ENCODE measurements at regions of chr2 and their contacts with region 1.

Region 1: DNA sequence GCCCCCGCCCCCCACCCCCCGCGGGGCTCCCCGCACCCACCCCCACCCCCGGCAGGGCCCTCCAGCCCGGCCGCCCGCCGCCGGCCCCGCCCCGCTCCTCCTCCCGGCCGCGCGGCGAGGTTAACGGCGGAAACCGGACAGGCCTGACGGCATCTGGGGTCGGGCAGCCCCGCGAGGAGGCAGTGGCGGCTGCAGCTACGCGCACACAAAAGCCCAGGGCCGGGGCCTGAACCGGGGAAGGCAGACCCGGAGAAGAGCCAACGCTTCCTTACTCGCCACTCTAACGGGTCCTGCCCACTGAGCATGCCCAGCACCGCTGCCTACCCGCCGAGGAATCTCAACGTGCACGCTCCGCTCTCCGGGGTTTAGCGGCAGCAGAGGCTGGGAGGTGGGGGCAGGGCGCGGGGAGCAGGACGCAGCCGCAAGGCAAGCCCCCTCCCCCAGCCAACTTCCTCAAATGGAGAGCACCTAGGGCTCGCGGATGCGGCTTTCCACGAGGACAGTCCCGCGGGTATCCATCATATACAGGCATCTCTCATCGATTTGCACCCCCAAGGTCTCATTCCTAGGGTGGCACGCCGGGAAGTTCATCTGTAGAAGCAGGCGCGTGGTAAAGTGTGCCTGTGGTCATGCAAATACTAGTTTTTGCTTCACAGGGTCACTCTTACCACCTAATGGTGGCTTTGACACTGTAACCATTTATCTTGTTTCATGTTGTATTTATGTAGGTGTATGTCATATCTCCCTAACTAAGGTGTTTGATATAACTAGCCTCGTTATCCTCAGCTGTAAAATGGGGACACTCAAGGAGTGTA is at the start of gene MEMO1:
- DNase-seq: peak; percentile 90 to 96 (median 94)
- H3K4me3 ChIP-seq: peak within 1 kb of the TSS; percentile 74 to 88 (median 82)
- H3K4me3 Mint-ChIP-seq: peak within 1 kb of the TSS; percentile 95 to 98
- H3K27ac ChIP-seq: peak within 1 kb of the TSS; percentile 83 to 97
- H3K27ac Mint-ChIP-seq: peak within 1 kb of the TSS; percentile 89 to 96 (median 95)
- H3K4me1 ChIP-seq: peaks cover 42 to 50% of the 10 kb centered on the region in 2 donors
- H3K4me1 Mint-ChIP-seq: peaks cover 49% of the 10 kb centered on the region
- H3K27me3 ChIP-seq: no peaks in the 10 kb centered on the region
- H3K27me3 Mint-ChIP-seq: peaks cover 0 to 2% (median 0%) of the 10 kb centered on the region in 3 donors
- CTCF ChIP-seq: no peak
- polyA plus RNA-seq, gene MEMO1: 49.5 to 63.7 (median 57.0) TPM

Region 2: GRCh38 chr2:31957354-31958139 is 53.3 kb before region 1 on chr2:
- intact Hi-C with region 1: loop called (anchors 10 kb)
- DNase-seq: peak; percentile 5 to 49 (median 27)
- H3K4me3 ChIP-seq: peak overlapping the region; percentile 54 to 93 (median 75)
- H3K4me3 Mint-ChIP-seq: peak overlapping the region; percentile 73 to 81
- H3K27ac ChIP-seq: peak overlapping the region in 1 of 2 donors; percentile 86
- H3K27ac Mint-ChIP-seq: peak overlapping the region; percentile 89 to 96 (median 93)
- H3K4me1 ChIP-seq: peaks cover 26 to 30% of the 10 kb centered on the region in 2 donors
- H3K4me1 Mint-ChIP-seq: peaks cover 43% of the 10 kb centered on the region
- H3K27me3 ChIP-seq: no peaks in the 10 kb centered on the region
- H3K27me3 Mint-ChIP-seq: no peaks in the 10 kb centered on the region
- CTCF ChIP-seq: no peak

Region 3: DNA sequence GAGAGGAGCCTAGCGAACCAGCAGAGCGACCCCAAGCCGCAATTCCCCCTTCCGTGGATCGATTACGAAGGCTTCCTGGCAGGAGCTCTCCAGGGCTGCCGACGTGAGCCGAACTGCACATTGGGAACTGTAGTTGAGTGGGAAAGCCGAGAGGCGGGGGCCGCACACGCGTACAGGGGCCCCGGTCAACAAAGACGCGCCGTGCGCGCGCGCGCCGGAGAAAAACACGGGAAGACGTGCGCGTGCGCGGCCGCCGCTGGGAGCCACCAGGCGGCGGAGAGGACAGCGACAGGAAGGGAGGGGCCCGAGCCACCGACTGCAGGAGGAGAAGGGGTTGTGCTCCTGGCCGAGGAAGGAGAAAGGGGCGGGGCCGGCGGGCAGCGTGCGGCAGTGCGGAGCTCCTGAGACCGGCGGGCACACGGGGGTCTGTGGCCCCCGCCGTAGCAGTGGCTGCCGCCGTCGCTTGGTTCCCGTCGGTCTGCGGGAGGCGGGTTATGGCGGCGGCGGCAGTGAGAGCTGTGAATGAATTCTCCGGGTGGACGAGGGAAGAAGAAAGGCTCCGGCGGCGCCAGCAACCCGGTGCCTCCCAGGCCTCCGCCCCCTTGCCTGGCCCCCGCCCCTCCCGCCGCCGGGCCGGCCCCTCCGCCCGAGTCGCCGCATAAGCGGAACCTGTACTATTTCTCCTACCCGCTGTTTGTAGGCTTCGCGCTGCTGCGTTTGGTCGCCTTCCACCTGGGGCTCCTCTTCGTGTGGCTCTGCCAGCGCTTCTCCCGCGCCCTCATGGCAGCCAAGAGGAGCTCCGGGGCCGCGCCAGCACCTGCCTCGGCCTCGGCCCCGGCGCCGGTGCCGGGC is 52.7 kb after region 1 on chr2 and contains the start of gene SPAST:
- intact Hi-C with region 1: loop called (anchors 5 kb)
- DNase-seq: peak; percentile 95 to 97 (median 96)
- H3K4me3 ChIP-seq: peak within 1 kb of the TSS; percentile 89 to 96 (median 96)
- H3K4me3 Mint-ChIP-seq: peak within 1 kb of the TSS; percentile 98
- H3K27ac ChIP-seq: peak within 1 kb of the TSS; percentile 81 to 91
- H3K27ac Mint-ChIP-seq: peak within 1 kb of the TSS; percentile 92 to 97 (median 96)
- H3K4me1 ChIP-seq: peaks cover 25 to 32% of the 10 kb centered on the region in 2 donors
- H3K4me1 Mint-ChIP-seq: peaks cover 29% of the 10 kb centered on the region
- H3K27me3 ChIP-seq: no peaks in the 10 kb centered on the region
- H3K27me3 Mint-ChIP-seq: peaks cover 0 to 4% (median 0%) of the 10 kb centered on the region in 3 donors
- CTCF ChIP-seq: peak; percentile 45
- polyA plus RNA-seq, gene SPAST: 10.4 to 17.4 (median 14.0) TPM

Region 4: GRCh38 chr2:32074134-32074506 is 63.2 kb after region 1 on chr2:
- intact Hi-C with region 1: no loop called
- DNase-seq: no peak
- H3K4me3 ChIP-seq: no peak overlapping the region
- H3K4me3 Mint-ChIP-seq: no peak overlapping the region
- H3K27ac ChIP-seq: peak overlapping the region in 1 of 2 donors; percentile 14
- H3K27ac Mint-ChIP-seq: no peak overlapping the region
- H3K4me1 ChIP-seq: peaks cover 5 to 11% of the 10 kb centered on the region in 2 donors
- H3K4me1 Mint-ChIP-seq: peaks cover 3% of the 10 kb centered on the region
- H3K27me3 ChIP-seq: no peaks in the 10 kb centered on the region
- H3K27me3 Mint-ChIP-seq: peaks cover 0 to 2% (median 0%) of the 10 kb centered on the region in 3 donors
- CTCF ChIP-seq: no peak